ENCODE measurements at regions of chr2 and their contacts with region 1.

Region 1: DNA sequence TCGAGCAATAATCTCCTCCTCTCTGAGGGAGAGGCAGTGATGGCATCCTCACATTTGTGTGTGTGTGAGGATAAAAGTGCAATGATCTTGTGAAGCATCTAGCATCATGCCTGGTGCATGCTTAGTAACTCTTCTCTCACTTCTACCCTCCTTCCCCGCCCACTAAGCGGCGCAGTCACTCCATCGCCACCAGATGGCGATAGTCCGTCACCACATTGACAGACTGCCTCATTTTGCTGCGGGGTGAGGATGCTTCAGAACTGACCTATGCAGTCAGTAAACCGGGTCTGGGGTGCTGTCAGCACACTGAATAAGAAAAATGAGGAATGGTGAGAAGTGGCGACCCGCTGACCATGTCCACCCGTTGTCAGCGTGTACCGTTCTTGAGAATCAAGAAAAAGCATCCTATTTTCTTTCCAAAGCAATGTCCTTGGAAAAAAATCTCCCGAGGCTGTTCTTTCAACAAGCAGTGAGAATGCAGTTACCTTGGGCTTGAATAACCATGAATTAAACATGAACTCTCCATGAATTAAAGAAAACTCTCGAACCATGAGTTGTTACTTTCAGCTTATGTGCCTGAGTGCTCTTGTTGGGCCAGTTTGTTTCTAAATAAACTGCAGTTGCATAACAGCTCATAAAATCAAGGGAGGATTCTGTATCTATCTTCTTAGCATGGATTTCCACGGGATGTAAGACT is 37.3 kb upstream of the TMEM177 start:
- DNase-seq: peak; percentile 56 to 72
- H3K4me3 ChIP-seq: no peak overlapping the region
- H3K27ac ChIP-seq: no peak overlapping the region
- H3K4me1 ChIP-seq: peaks cover 10% of the 10 kb centered on the region
- H3K27me3 ChIP-seq: peaks cover 8% of the 10 kb centered on the region; the same call in 1 of the 2 replicates
- CTCF ChIP-seq: peak; percentile 95

Region 2: DNA sequence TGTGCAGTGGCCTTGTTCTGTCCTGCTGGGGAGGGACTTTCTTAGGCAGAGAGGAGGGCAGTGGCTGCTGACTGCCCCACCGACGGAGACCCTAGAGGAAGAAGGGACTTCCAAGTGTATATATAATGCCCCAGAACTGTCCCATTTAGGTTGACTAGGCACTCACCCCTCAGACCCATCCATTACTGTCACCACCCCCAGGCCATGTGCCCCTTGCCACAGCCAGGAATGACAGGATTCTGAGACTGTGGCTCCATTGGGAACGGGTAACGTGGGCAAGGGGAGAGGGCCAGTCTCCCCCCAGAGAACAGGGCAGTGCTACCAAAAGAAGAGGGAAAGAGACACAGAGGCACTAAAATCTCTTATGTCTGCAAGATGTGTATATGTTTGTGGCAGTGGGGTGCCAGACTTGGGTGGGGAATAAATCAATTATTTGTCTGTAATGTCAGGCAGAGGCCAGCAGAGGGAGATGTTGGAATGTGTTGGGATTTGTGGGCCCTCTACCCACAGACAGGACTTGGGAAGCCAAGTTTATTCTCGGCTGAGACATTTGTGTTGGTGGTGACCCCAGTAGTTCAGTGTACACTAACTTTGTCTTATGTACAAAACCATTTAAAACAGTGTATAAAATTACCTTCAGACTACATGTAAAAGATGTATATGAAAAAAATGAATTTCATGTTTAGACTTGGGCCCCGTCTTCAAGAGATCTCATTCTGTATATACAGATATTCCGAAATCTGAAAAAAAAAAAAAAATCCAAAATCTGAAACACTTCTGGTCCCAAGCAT is 234.1 kb before region 1 on chr2:
- CTCF ChIA-PET with region 1: no interaction called
- POLR2A ChIA-PET with region 1: no interaction called
- intact Hi-C with region 1: loop called (anchors 1 kb)
- DNase-seq: peak; percentile 44 to 57
- H3K4me3 ChIP-seq: no peak overlapping the region
- H3K27ac ChIP-seq: no peak overlapping the region
- H3K4me1 ChIP-seq: peaks cover 5% of the 10 kb centered on the region; the same call in 1 of the 2 replicates
- H3K27me3 ChIP-seq: no peaks in the 10 kb centered on the region
- CTCF ChIP-seq: peak; percentile 98

Region 3: DNA sequence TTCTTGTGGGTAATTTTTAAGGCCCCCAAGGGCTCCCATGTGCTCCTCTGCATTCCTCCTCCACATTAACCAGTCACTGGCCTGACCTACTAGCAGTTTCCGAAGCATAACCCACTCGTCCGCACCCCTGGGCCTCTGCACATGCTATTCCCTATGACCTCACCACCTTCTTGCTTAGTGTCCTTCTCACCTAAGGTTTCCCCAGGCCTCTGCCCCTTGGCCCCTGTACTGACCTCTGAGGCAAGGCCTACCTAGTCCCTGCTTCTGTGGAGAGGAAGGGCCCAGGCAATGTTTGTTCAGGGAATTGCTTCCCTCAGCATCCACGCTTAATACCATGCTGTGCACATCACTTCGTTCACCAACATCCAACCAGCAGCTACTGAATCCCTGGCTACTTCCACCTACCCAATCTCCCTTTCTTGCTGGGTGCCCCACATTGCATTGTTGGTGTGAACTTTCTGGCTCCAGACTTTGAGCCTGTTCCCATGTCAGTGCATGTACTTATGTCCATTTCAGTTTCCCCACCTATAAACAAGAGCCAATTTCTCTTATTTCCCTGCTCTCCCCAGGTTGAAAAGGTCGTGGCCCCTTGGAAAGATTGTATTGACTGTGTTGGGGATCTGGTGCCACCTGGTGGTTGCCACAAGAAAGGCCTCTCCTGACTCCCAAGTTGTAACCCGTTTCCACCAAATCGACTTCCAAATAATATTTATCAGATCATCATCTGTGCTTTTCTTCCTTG is 18.1 kb after region 1 on chr2:
- CTCF ChIA-PET with region 1: interaction called, 5 read pairs
- POLR2A ChIA-PET with region 1: no interaction called
- intact Hi-C with region 1: loop called (anchors 1 kb)
- DNase-seq: peak in 1 of 2 experiments; percentile 40
- H3K4me3 ChIP-seq: no peak overlapping the region
- H3K27ac ChIP-seq: no peak overlapping the region
- H3K4me1 ChIP-seq: no peaks in the 10 kb centered on the region
- H3K27me3 ChIP-seq: 0 out of 2 replicates have a peak, but pooled peaks cover 3% of the 10 kb centered on the region
- CTCF ChIP-seq: peak; percentile 96

Region 4: DNA sequence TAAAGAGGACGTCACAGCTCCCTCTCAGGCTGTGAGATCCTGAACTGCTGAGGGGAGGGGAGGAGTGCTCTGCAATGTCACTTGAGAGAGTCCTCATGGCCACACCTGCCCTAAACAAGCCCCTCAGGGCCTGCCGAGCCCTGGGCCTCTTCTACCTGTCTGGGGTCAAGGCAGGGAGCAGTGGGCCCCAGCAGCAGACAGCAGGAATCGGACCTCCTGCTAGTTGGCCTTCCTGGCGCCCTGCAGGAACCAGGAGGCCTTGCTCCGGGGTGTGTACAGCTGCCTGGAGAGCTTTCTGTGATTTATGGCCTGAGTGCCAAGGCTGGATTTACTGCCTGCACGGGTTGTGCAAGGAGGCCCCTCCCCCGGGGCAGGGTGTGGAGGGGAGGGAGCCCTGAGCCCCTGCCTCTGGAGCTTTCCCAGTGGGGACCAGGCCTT is 603.7 kb after region 1 on chr2:
- CTCF ChIA-PET with region 1: no interaction called
- POLR2A ChIA-PET with region 1: interaction called, 10 read pairs
- intact Hi-C with region 1: no loop called
- DNase-seq: peak; percentile 90 to 98
- H3K4me3 ChIP-seq: peak overlapping the region; percentile 9; the same call in 1 of the 2 replicates
- H3K27ac ChIP-seq: peak overlapping the region; percentile 67
- H3K4me1 ChIP-seq: peaks cover 73% of the 10 kb centered on the region
- H3K27me3 ChIP-seq: no peaks in the 10 kb centered on the region
- CTCF ChIP-seq: no peak

Region 5: GRCh38 chr2:120312861-120313694 is 671.4 kb after region 1 on chr2:
- CTCF ChIA-PET with region 1: no interaction called
- POLR2A ChIA-PET with region 1: no interaction called
- intact Hi-C with region 1: loop called (anchors 1 kb)
- DNase-seq: peak; percentile 77 to 90
- H3K4me3 ChIP-seq: no peak overlapping the region
- H3K27ac ChIP-seq: no peak overlapping the region
- H3K4me1 ChIP-seq: no peaks in the 10 kb centered on the region
- H3K27me3 ChIP-seq: no peaks in the 10 kb centered on the region
- CTCF ChIP-seq: peak; percentile 98